Astrocyte of the cerebellum (primary cell): ENCODE measurements at regions of chr2 and their contacts with region 1.

Region 1: GRCh38 chr2:236833501-236834073 is 252.1 kb upstream of the COPS8 start:
- DNase-seq: no peak
- H3K4me3 ChIP-seq: no peak overlapping the region
- CTCF ChIP-seq: no peak

Region 2: GRCh38 chr2:236045251-236046235 is 788.0 kb before region 1 on chr2:
- in situ Hi-C with region 1: no loop called
- DNase-seq: no peak
- H3K4me3 ChIP-seq: no peak overlapping the region
- CTCF ChIP-seq: no peak

Region 3: DNA sequence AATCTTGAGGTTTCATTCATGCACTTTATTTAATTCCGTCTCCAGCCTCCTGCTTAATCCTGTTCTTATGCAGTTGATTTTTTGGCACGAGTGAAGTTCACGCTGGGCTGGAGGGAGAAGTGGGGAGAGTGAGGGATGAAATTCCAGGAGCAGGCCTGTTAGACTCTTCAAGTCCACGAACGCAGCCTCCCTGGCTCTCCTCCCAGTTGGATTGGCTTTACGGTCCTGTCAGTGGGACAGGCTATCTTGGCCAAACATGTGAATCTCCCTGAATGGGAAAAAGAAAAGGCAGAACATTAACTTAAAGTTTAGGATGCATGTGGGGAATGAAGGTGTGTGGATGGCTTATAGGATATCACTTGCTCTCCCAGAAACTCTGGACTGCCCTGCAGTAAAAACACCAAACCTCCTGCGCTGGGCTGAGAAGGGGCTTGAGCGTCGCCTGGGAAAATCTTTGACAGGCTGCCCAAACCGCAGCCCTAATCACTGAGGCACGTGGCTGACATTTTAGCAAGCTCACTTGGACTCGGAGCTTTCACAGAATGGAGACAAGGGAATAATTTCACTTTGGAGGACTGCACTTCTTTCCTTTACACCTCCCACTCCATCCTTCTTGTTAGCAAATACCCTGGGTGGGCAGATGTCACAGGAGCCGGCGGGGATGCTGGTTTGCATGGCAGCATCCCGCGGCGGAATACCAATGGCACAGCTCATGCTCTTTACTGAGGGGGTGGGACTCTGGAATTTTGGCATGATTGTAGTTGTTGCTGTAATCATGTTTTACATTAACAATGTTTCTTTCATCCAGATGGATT is 170.1 kb before region 1 on chr2:
- in situ Hi-C with region 1: no loop called
- DNase-seq: peak; percentile 91
- H3K4me3 ChIP-seq: no peak overlapping the region
- CTCF ChIP-seq: no peak

Region 4: GRCh38 chr2:236867441-236868260 is 34.1 kb after region 1 on chr2:
- in situ Hi-C with region 1: loop called (anchors 5 kb)
- DNase-seq: no peak
- H3K4me3 ChIP-seq: no peak overlapping the region
- CTCF ChIP-seq: no peak

Region 5: GRCh38 chr2:236899950-236900640 is 66.5 kb after region 1 on chr2:
- in situ Hi-C with region 1: no loop called
- DNase-seq: no peak
- H3K4me3 ChIP-seq: no peak overlapping the region
- CTCF ChIP-seq: no peak